ENCODE measurements at regions of chr11 and their contacts with region 1.

Region 1: DNA sequence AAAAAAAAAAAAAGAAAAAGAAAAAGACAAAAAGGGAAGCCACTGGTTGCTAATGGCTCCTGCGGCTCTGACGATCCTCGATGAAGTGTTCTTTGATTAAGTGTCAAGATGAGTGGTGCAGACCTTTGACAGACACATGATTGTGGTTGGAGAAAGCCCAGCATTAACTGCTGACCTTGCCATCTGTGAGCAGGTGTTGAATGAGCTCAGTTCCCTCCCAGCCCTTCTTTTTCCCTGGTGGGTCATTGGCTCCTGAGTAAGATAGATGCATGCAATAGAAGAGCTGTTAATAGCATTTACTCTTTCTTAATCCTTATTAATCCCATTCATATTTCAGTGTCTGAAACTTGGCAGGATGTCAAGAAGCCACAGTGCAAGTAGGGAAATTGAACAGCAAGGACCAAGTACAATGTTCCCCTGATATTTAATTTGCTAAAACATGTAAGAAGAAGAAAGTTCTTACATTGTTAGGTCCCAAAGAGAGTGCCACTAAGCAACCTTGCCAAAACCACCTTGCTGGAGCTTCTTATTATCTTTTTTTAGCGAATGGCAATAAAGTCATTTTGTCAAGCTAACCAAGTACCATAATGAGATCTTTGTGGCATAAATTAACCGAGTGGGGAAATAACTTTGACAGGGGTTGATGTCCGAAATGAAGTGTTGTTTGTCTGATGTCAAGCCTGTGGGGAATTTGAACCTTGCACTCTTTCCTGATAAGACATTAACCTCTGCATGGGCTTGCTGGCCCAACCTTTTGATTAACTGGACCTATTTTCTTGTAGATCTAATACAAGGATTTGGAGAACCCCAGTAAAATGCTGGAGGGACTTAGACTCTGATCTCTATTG is 113.7 kb downstream of the PTPRJ start:
- DNase-seq: no peak
- ATAC-seq: no peak
- H3K4me3 ChIP-seq: no peak overlapping the region
- H3K4me3 Mint-ChIP-seq: peak overlapping the region in 2 of 3 donors; percentile 22 to 29
- H3K27ac ChIP-seq: no peak overlapping the region
- H3K27ac Mint-ChIP-seq: no peak overlapping the region
- H3K4me1 ChIP-seq: peaks cover 2 to 26% of the 10 kb centered on the region in 2 experiments
- H3K4me1 Mint-ChIP-seq: peaks cover 75 to 79% (median 75%) of the 10 kb centered on the region in 3 donors
- H3K27me3 ChIP-seq: no peaks in the 10 kb centered on the region
- H3K27me3 Mint-ChIP-seq: no peaks in the 10 kb centered on the region

Region 2: DNA sequence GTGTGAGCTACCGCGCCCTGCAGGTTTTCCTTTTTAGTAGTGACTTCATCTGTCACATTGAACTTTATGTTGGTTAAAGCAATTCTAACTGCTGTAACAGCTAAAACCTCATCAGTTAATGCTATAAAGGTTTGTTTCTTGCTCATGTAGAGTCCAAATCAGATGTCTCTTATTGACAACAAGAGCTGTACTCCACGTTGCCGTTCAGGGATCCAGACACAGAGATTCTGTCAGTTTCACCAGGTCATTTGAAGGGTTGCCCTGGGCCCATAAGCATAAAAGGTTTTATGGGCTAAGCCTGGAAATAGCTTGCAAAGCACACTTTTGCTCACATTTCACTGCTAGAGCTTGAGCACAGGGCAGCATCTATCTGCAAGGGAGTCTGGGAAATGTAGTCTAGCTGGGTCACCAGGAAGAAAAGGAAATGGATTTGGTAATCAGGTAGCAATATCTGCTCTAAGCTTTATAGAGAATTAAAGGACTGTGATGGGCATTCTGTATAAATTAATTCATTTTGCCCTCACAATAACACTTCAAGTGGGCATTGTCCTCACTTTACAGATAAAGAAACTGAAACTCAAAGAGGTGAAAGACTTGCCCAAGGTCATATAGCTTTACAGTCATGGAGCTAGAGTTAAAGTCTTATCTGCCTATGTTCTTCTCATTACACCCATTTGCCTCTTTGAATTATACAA is 138.8 kb before region 1 on chr11:
- CTCF ChIA-PET with region 1: interaction called in 1 of 2 experiments, 6 read pairs
- POLR2A ChIA-PET with region 1: interaction called in 1 of 2 experiments, 10 read pairs
- DNase-seq: peak in 3 of 35 experiments; percentile 6 to 29 (median 27)
- ATAC-seq: peak in 2 of 4 experiments; percentile 35 to 41
- H3K4me3 ChIP-seq: no peak overlapping the region
- H3K4me3 Mint-ChIP-seq: no peak overlapping the region
- H3K27ac ChIP-seq: no peak overlapping the region
- H3K27ac Mint-ChIP-seq: peak overlapping the region; percentile 55 to 80
- H3K4me1 ChIP-seq: peaks cover 3 to 14% of the 10 kb centered on the region in 2 experiments
- H3K4me1 Mint-ChIP-seq: peaks cover 19 to 31% (median 20%) of the 10 kb centered on the region in 3 donors
- H3K27me3 ChIP-seq: no peaks in the 10 kb centered on the region
- H3K27me3 Mint-ChIP-seq: no peaks in the 10 kb centered on the region

Region 3: GRCh38 chr11:48063424-48063978 is 30.5 kb before region 1 on chr11:
- CTCF ChIA-PET with region 1: no interaction called
- POLR2A ChIA-PET with region 1: no interaction called
- DNase-seq: no peak
- ATAC-seq: no peak
- H3K4me3 ChIP-seq: no peak overlapping the region
- H3K4me3 Mint-ChIP-seq: peak overlapping the region in 1 of 3 donors; percentile 41
- H3K27ac ChIP-seq: no peak overlapping the region
- H3K27ac Mint-ChIP-seq: peak overlapping the region; percentile 22 to 31
- H3K4me1 ChIP-seq: peaks cover 11 to 32% of the 10 kb centered on the region in 2 experiments
- H3K4me1 Mint-ChIP-seq: peaks cover 59 to 74% (median 73%) of the 10 kb centered on the region in 3 donors
- H3K27me3 ChIP-seq: no peaks in the 10 kb centered on the region
- H3K27me3 Mint-ChIP-seq: no peaks in the 10 kb centered on the region